ENCODE measurements at regions of chr7 and their contacts with region 1.

Region 1: GRCh38 chr7:33062782-33063443 is 337 bp upstream of the NT5C3A start:
- DNase-seq: peak; percentile 94
- H3K4me3 ChIP-seq: peak overlapping the region; percentile 62 to 95 (median 84)
- H3K27ac ChIP-seq: peak overlapping the region; percentile 73
- H3K4me1 ChIP-seq: peaks cover 5% of the 10 kb centered on the region
- H3K27me3 ChIP-seq: no peaks in the 10 kb centered on the region
- CTCF ChIP-seq: no peak

Region 2: DNA sequence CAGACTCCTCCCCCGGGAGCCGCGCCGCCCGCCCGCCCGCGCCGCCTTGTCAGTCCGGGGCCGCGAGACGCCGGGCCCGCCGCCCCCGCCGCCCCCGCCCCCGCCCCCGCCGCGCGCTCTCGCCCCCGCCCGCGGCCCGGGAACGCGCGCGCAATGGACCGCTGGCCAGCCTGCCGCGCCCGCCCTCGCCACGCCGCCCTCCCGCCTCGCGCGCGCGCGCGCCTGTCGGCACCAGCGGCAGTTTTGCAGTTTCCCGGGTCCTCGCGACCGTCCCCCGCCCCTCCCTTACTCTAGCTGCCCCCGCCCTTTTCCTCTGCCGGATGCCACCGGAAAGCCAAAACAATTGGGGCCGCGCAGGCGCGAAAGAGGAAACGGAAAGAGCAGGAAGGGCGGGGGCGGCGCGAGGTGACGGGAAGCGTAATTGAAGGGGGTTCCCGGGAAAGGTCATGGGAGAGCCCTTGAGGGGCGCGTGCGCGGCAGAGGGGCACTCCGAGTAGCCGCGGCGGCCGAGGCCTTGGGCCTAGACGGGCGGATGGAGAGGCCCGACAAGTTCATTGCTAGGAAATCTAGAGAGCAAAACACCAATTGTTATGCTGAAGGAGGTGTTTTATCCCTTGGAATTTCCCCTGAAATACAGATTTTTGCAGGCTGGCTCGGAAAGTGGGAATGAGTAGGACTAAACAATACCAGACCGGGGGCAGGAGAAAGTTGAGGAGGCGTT is 171.0 kb before region 1 on chr7:
- CTCF ChIA-PET with region 1: no interaction called
- dilution Hi-C with region 1: no loop called
- in situ Hi-C with region 1: no loop called
- intact Hi-C with region 1: loop called (anchors 5 kb)
- DNase-seq: peak; percentile 95
- H3K4me3 ChIP-seq: peak overlapping the region; percentile 85 to 91 (median 85)
- H3K27ac ChIP-seq: peak overlapping the region; percentile 96
- H3K4me1 ChIP-seq: peaks cover 24% of the 10 kb centered on the region
- H3K27me3 ChIP-seq: no peaks in the 10 kb centered on the region
- CTCF ChIP-seq: no peak

Region 3: GRCh38 chr7:33009734-33010133 is 53.2 kb before region 1 on chr7:
- CTCF ChIA-PET with region 1: no interaction called
- dilution Hi-C with region 1: no loop called
- in situ Hi-C with region 1: no loop called
- intact Hi-C with region 1: no loop called
- DNase-seq: no peak
- H3K4me3 ChIP-seq: no peak overlapping the region
- H3K27ac ChIP-seq: no peak overlapping the region
- H3K4me1 ChIP-seq: no peaks in the 10 kb centered on the region
- H3K27me3 ChIP-seq: no peaks in the 10 kb centered on the region
- CTCF ChIP-seq: no peak

Region 4: DNA sequence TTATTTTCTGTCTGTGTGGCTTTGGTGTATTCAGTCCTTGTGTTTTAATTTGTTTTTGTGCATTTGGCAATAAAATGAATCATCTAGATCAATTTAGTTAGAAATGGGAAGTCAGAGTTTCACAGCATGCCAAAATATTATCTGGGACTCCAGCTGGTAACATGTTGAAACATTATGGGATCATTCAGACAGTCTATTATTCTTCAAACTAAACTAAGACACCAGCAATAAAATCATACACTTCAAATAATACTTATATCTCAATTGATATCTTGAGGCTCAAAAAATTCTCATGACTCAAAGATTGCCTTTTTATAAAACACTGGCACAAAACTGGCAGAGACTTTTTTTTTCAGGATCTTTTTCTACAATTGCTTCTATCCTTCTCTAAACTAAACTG is 52.1 kb after region 1 on chr7:
- CTCF ChIA-PET with region 1: no interaction called
- dilution Hi-C with region 1: no loop called
- in situ Hi-C with region 1: no loop called
- intact Hi-C with region 1: no loop called
- DNase-seq: no peak
- H3K4me3 ChIP-seq: no peak overlapping the region
- H3K27ac ChIP-seq: no peak overlapping the region
- H3K4me1 ChIP-seq: peaks cover under 1% of the 10 kb centered on the region
- H3K27me3 ChIP-seq: no peaks in the 10 kb centered on the region
- CTCF ChIP-seq: no peak

Region 5: GRCh38 chr7:33776788-33777481 is 714.0 kb after region 1 on chr7:
- CTCF ChIA-PET with region 1: no interaction called
- dilution Hi-C with region 1: no loop called
- in situ Hi-C with region 1: no loop called
- intact Hi-C with region 1: no loop called
- DNase-seq: peak; percentile 36
- H3K4me3 ChIP-seq: no peak overlapping the region
- H3K27ac ChIP-seq: no peak overlapping the region
- H3K4me1 ChIP-seq: no peaks in the 10 kb centered on the region
- H3K27me3 ChIP-seq: no peaks in the 10 kb centered on the region
- CTCF ChIP-seq: no peak

Measured in mammary epithelial cell (primary cell).